Activated CD4-positive, alpha-beta T cell treated with anti-CD3 and anti-CD28 coated beads for 36 hours (primary cell): ENCODE measurements at regions of chr7 and their contacts with region 1.

Region 1: DNA sequence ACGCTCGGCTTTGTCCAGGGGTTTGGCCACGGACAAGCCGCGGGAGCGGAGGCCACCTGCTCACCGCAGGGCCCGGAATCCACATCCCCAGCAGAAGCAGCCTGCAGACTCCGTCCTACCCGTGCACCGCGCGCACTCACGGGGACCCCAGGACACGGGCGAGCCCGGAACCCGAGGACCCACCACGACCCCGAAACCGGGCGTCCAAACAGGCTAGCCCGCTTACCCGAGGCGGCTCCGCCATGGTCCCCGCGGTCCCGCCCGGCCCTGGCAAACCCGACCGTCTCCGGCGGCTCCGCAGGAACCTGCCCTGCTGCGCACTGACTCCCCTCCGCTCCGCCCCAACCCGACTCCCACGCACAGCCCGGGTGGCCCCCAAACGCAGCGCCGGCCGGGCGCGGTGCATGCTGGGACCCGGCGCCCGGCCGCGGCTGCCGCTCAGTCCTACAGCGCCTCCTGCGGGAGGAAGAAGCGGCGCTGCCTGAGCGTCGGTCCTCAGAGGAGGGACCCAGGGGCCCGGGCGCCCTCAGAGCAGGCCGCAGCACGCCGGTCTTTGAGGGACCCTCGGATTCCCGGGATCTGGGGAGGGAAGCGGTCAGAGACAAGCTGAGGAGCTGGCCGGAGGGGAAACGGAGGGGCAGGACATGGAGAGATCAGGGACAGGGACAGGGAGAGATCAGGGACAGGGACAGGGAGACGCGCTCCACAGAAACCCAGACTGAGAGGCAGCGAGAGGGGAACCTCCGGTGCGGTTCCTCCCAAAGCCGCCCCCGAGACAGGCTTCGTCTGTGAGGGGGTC is at the start of gene ZNF786:
- DNase-seq: peak; percentile 97
- ATAC-seq: peak; percentile 87
- H3K4me3 Mint-ChIP-seq: peak within 1 kb of the TSS; percentile 89
- H3K27ac Mint-ChIP-seq: peak within 1 kb of the TSS; percentile 100
- H3K4me1 Mint-ChIP-seq: peaks cover 19% of the 10 kb centered on the region
- H3K27me3 Mint-ChIP-seq: no peaks in the 10 kb centered on the region
- total RNA-seq, gene ZNF786: 4.4 to 4.8 TPM

Region 2: GRCh38 chr7:148940702-148941597 is 149.6 kb before region 1 on chr7:
- CTCF ChIA-PET with region 1: no interaction called
- POLR2A ChIA-PET with region 1: no interaction called
- intact Hi-C with region 1: loop called in 1 of 2 experiments (anchors 1 kb)
- DNase-seq: peak; percentile 78
- ATAC-seq: peak; percentile 68
- H3K4me3 Mint-ChIP-seq: peak overlapping the region; percentile 98
- H3K27ac Mint-ChIP-seq: peak overlapping the region; percentile 100
- H3K4me1 Mint-ChIP-seq: peaks cover 16% of the 10 kb centered on the region
- H3K27me3 Mint-ChIP-seq: no peaks in the 10 kb centered on the region

Region 3: DNA sequence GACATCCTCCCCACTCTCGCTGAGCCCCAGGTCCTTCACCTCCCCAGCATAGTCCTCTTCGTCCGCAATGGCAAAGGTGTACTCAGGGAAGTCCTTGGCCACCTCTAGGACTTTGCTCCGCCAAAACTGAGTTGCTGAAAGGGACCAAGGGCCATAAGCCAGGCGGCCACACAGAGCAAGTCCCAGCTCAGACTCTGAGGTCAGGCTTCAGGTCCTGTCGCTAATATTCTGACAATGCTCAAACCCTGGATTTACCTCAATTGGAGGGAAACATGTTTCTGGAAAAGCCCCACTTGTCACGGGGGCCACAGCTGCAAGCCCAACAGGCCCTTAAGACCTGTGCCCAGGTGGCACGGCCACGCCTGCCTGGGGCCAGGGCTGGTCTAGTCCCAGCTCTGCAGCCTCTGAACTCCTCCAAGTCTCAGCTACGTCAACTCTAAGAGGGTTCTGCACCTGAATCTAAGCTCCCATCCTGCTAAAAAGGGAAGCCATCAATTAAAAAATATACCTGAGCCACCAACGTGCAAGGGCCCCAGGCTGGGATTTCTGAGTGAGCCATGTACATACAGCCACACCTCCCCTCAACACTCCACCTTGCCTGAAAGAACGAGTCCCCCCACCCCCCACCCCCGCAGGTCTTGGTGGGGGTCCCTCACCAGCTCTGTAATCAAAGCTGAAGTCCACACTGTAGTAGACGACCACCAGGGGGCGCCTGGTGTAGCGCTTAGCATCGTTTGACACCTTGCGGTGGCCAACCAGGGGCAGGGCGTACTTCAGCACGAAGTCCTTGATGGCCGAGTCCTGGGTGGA is 85.2 kb before region 1 on chr7:
- CTCF ChIA-PET with region 1: interaction called, 4 read pairs
- POLR2A ChIA-PET with region 1: no interaction called
- intact Hi-C with region 1: loop called (anchors 1 kb)
- DNase-seq: peak; percentile 90
- ATAC-seq: peak; percentile 90
- H3K4me3 Mint-ChIP-seq: no peak overlapping the region
- H3K27ac Mint-ChIP-seq: peak overlapping the region; percentile 8
- H3K4me1 Mint-ChIP-seq: peaks cover 2% of the 10 kb centered on the region
- H3K27me3 Mint-ChIP-seq: no peaks in the 10 kb centered on the region

Region 4: GRCh38 chr7:149125863-149126661 is 35.5 kb after region 1 on chr7 and contains the start of gene ZNF425:
- CTCF ChIA-PET with region 1: interaction called, 4 read pairs
- POLR2A ChIA-PET with region 1: no interaction called
- intact Hi-C with region 1: loop called (anchors 1 kb)
- DNase-seq: peak; percentile 96
- ATAC-seq: peak; percentile 88
- H3K4me3 Mint-ChIP-seq: peak within 1 kb of the TSS; percentile 83
- H3K27ac Mint-ChIP-seq: peak within 1 kb of the TSS; percentile 99
- H3K4me1 Mint-ChIP-seq: peaks cover 21% of the 10 kb centered on the region
- H3K27me3 Mint-ChIP-seq: no peaks in the 10 kb centered on the region
- total RNA-seq, gene ZNF425: 0.43 to 0.95 TPM

Region 5: GRCh38 chr7:149460493-149461277 is 370.1 kb after region 1 on chr7 and contains the start of gene ZNF777:
- CTCF ChIA-PET with region 1: no interaction called
- POLR2A ChIA-PET with region 1: no interaction called
- intact Hi-C with region 1: loop called in 1 of 2 experiments (anchors 2 kb)
- DNase-seq: peak; percentile 90
- ATAC-seq: peak; percentile 96
- H3K4me3 Mint-ChIP-seq: peak within 1 kb of the TSS; percentile 84
- H3K27ac Mint-ChIP-seq: peak within 1 kb of the TSS; percentile 87
- H3K4me1 Mint-ChIP-seq: peaks cover 21% of the 10 kb centered on the region
- H3K27me3 Mint-ChIP-seq: peaks cover 10% of the 10 kb centered on the region
- total RNA-seq, gene ZNF777: 13.3 to 16.4 TPM